ENCODE measurements at regions of chr7 and their contacts with region 1.

Region 1: DNA sequence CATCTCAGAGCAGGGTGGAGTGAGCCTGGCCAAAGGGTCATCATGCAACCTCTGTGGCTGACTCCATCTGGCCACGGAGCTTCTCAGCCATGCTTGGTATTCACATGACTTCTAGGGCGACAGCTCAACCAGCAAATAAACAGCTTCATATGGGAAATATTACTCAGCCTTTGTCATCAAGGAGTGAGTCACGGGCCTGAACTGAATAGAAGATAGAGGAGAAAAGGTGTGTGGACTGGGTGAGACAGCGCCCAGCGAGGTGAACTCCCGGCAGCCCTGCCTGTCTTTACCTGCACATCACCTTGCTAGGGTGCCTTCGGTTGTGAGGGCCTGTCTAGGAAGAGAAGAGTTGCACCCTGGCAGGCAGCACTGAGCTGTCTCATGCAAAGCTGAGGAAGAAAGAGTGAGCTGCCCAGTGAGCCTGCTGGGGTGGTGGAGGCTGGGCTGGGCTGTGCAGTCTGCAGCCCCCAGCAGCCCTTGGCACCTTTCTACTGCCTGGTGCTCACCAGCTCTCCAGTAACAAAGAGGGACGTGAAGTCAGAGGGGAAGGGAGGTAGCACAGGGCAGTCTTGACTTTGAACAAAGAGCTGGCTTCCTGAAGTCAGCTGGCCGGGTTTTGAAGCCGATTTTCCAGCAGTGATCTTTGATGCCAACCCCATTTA is 114.2 kb downstream of the EGFR start:
- DNase-seq: peak; percentile 75
- ATAC-seq: peak; percentile 54
- H3K4me3 ChIP-seq: peak overlapping the region in 2 of 3 experiments; percentile 2 to 63; a peak in 3 of 6 replicates
- H3K27ac ChIP-seq: peak overlapping the region; percentile 52
- H3K4me1 ChIP-seq: peaks cover 59% of the 10 kb centered on the region
- H3K27me3 ChIP-seq: no peaks in the 10 kb centered on the region
- CTCF ChIP-seq: no peak
- EP300 ChIP-seq: peak in 1 of 2 experiments; percentile 48; a peak in 1 of 4 replicates
- POLR2A ChIP-seq: no peak; a peak in 1 of 4 replicates
- RAD21 ChIP-seq: no peak

Region 2: GRCh38 chr7:54839538-54840213 is 293.3 kb before region 1 on chr7:
- CTCF ChIA-PET with region 1: no interaction called
- POLR2A ChIA-PET with region 1: no interaction called
- in situ Hi-C with region 1: no loop called
- intact Hi-C with region 1: loop called (anchors 5 kb)
- DNase-seq: peak; percentile 20
- ATAC-seq: peak; percentile 96
- H3K4me3 ChIP-seq: no peak overlapping the region
- H3K27ac ChIP-seq: no peak overlapping the region
- H3K4me1 ChIP-seq: peaks cover 19% of the 10 kb centered on the region
- H3K27me3 ChIP-seq: 0 out of 5 replicates have a peak, but pooled peaks cover 0 to 3% of the 10 kb centered on the region in 2 experiments
- CTCF ChIP-seq: peak; percentile 87
- EP300 ChIP-seq: no peak
- POLR2A ChIP-seq: no peak
- RAD21 ChIP-seq: peak; percentile 60

Region 3: DNA sequence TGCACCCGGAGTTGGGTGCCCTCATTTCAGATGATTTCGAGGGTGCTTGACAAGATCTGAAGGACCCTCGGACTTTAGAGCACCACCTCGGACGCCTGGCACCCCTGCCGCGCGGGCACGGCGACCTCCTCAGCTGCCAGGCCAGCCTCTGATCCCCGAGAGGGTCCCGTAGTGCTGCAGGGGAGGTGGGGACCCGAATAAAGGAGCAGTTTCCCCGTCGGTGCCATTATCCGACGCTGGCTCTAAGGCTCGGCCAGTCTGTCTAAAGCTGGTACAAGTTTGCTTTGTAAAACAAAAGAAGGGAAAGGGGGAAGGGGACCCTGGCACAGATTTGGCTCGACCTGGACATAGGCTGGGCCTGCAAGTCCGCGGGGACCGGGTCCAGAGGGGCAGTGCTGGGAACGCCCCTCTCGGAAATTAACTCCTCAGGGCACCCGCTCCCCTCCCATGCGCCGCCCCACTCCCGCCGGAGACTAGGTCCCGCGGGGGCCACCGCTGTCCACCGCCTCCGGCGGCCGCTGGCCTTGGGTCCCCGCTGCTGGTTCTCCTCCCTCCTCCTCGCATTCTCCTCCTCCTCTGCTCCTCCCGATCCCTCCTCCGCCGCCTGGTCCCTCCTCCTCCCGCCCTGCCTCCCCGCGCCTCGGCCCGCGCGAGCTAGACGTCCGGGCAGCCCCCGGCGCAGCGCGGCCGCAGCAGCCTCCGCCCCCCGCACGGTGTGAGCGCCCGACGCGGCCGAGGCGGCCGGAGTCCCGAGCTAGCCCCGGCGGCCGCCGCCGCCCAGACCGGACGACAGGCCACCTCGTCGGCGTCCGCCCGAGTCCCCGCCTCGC is 114.4 kb before region 1 on chr7 and contains the start of gene EGFR:
- CTCF ChIA-PET with region 1: no interaction called
- POLR2A ChIA-PET with region 1: interaction called, 7 read pairs
- in situ Hi-C with region 1: no loop called
- intact Hi-C with region 1: loop called (anchors 10 kb)
- DNase-seq: no peak
- ATAC-seq: peak; percentile 78
- H3K4me3 ChIP-seq: peak within 1 kb of the TSS; percentile 63 to 74 (median 64)
- H3K27ac ChIP-seq: no peak within 1 kb of the TSS
- H3K4me1 ChIP-seq: peaks cover 53% of the 10 kb centered on the region
- H3K27me3 ChIP-seq: peaks cover 7 to 32% of the 10 kb centered on the region in 2 experiments
- CTCF ChIP-seq: no peak; the same call in 1 of the 2 replicates
- EP300 ChIP-seq: no peak
- POLR2A ChIP-seq: no peak
- RAD21 ChIP-seq: 0 out of 2 replicates have a peak, but pooled peaks have one; percentile 22
- total RNA-seq, gene EGFR: 7.0 TPM in 2 replicates

Region 4: DNA sequence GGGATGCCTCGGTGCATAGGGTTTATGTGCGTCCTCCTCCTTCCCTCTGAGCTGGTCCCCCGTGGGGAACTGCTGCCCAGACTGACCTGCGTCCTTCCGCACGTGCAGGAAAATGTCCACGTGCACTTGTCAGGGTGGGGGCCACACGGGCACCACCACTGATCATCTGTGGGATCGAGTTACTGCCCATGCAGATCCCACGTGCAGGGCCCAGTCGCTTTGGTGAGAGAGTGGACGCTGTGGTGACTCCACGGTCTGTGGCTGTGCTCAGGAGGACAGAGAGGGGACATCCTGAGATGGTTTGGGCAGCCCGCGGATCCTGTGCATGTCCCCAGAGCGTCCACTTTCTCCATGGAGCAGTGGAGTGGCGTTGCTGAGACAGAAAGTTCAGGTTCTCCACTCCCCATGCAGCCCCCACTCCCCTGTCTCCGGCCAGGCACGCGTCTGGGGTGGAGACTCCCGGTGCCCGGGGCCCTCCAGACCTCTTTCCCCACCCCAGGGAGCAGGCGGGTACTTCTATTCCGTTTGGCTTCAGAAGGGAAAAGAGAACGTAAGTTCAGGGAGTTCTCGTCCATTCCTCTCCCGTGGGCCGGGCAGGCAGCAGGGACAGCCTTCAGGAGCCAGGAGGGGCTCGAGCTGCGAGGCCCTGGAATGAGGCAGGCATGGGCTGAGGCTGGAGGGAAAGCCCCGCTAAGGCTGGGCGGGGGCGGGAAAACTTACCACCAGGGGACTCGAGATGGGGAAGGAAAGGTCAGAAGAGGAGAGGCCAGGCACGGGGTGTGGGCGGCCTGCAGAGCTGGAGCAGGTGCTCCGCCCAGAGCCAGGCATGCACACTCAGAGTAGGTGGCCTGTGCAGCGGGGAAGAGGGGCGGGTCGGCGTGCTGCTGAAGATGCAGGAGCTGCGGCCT is 54.3 kb before region 1 on chr7:
- CTCF ChIA-PET with region 1: no interaction called
- POLR2A ChIA-PET with region 1: interaction called, 9 read pairs
- in situ Hi-C with region 1: no loop called
- intact Hi-C with region 1: loop called (anchors 2 kb)
- DNase-seq: peak; percentile 77
- ATAC-seq: peak; percentile 91
- H3K4me3 ChIP-seq: peak overlapping the region; percentile 53 to 77 (median 56)
- H3K27ac ChIP-seq: peak overlapping the region; percentile 94
- H3K4me1 ChIP-seq: peaks cover 89% of the 10 kb centered on the region
- H3K27me3 ChIP-seq: no peaks in the 10 kb centered on the region
- CTCF ChIP-seq: peak; percentile 74
- EP300 ChIP-seq: peak in 1 of 2 experiments; percentile 47; a peak in 2 of 4 replicates
- POLR2A ChIP-seq: peak; percentile 27 to 48; a peak in 2 of 4 replicates
- RAD21 ChIP-seq: no peak

Region 5: DNA sequence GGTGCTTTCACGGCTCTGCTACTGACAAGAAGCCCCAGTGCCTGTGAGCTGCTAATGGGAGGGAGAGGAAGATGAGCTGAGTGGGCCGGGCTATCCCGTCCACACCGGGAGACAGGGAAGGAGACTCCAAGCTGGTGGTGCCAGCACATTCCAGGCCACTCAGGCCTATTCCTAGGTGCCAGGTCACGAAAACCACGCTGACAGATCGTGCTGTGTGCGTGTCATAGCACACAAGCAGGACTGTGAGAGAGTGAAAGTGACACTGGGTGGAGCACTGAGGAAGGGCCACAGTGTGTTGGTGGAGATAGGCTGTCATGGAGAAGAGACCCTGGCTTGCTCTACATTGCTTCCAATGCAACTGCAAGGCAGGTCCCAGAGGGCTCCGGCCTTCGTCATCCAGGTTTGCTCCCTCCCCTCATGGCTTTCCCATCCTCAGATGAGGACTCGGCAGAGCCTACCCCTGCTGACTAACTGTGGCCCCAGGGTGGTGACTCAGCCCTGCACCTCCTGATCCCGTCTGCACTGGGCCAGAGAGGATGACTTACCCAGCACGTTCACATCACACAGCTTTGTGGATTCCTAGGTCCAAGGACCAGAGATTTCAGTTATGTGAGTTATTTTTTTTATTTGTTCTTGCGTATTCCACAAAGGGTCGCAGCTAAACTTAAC is 53.1 kb after region 1 on chr7:
- CTCF ChIA-PET with region 1: no interaction called
- POLR2A ChIA-PET with region 1: interaction called, 23 read pairs
- in situ Hi-C with region 1: no loop called
- intact Hi-C with region 1: no loop called
- DNase-seq: peak; percentile 78
- ATAC-seq: peak; percentile 75
- H3K4me3 ChIP-seq: peak overlapping the region in 1 of 3 experiments; percentile 70; a peak in 2 of 6 replicates
- H3K27ac ChIP-seq: peak overlapping the region; percentile 99
- H3K4me1 ChIP-seq: peaks cover 96% of the 10 kb centered on the region
- H3K27me3 ChIP-seq: no peaks in the 10 kb centered on the region
- CTCF ChIP-seq: no peak
- EP300 ChIP-seq: peak in 1 of 2 experiments; percentile 62; a peak in 2 of 4 replicates
- POLR2A ChIP-seq: no peak
- RAD21 ChIP-seq: peak; percentile 21; the same call in 1 of the 2 replicates

Region 6: DNA sequence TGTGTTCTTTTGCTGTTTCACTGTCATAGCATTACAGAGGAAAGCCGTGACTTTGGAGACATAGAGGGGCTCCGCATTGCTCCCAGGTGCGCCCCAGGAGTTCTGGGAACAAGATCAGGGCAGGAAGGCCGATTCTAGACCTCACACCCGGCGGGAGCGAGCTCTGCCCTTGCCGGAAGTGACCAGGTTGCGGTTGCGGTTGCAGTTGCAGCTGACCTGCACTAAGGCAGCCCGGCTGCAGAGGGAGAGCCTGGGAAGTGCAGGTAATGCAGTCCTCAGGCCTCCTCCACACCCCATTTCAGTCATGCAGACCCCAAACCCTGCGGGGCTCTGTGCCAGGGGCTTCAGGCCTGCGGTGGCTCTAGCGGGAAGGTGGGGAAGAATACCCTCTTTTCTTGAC is 102.1 kb after region 1 on chr7:
- CTCF ChIA-PET with region 1: no interaction called
- POLR2A ChIA-PET with region 1: no interaction called
- in situ Hi-C with region 1: no loop called
- intact Hi-C with region 1: no loop called
- DNase-seq: no peak
- ATAC-seq: peak; percentile 68
- H3K4me3 ChIP-seq: no peak overlapping the region
- H3K27ac ChIP-seq: no peak overlapping the region
- H3K4me1 ChIP-seq: no peaks in the 10 kb centered on the region
- H3K27me3 ChIP-seq: peaks cover 3 to 53% of the 10 kb centered on the region in 2 experiments
- CTCF ChIP-seq: no peak
- EP300 ChIP-seq: no peak
- POLR2A ChIP-seq: no peak
- RAD21 ChIP-seq: no peak

Region 7: GRCh38 chr7:55245271-55245723 is 112.3 kb after region 1 on chr7:
- CTCF ChIA-PET with region 1: no interaction called
- POLR2A ChIA-PET with region 1: no interaction called
- in situ Hi-C with region 1: no loop called
- intact Hi-C with region 1: no loop called
- DNase-seq: peak; percentile 4
- ATAC-seq: peak; percentile 67
- H3K4me3 ChIP-seq: no peak overlapping the region
- H3K27ac ChIP-seq: no peak overlapping the region
- H3K4me1 ChIP-seq: peaks cover 8% of the 10 kb centered on the region; the same call in 1 of the 2 replicates
- H3K27me3 ChIP-seq: peaks cover 0 to 18% of the 10 kb centered on the region in 2 experiments; a peak in 1 of 5 replicates
- CTCF ChIP-seq: no peak
- EP300 ChIP-seq: no peak
- POLR2A ChIP-seq: no peak
- RAD21 ChIP-seq: no peak

Region 8: GRCh38 chr7:55457801-55458200 is 324.8 kb after region 1 on chr7:
- CTCF ChIA-PET with region 1: no interaction called
- POLR2A ChIA-PET with region 1: no interaction called
- in situ Hi-C with region 1: no loop called
- intact Hi-C with region 1: no loop called
- DNase-seq: no peak
- ATAC-seq: no peak
- H3K4me3 ChIP-seq: no peak overlapping the region
- H3K27ac ChIP-seq: no peak overlapping the region
- H3K4me1 ChIP-seq: no peaks in the 10 kb centered on the region
- H3K27me3 ChIP-seq: no peaks in the 10 kb centered on the region
- CTCF ChIP-seq: no peak
- EP300 ChIP-seq: no peak
- POLR2A ChIP-seq: no peak
- RAD21 ChIP-seq: no peak

Region 9: DNA sequence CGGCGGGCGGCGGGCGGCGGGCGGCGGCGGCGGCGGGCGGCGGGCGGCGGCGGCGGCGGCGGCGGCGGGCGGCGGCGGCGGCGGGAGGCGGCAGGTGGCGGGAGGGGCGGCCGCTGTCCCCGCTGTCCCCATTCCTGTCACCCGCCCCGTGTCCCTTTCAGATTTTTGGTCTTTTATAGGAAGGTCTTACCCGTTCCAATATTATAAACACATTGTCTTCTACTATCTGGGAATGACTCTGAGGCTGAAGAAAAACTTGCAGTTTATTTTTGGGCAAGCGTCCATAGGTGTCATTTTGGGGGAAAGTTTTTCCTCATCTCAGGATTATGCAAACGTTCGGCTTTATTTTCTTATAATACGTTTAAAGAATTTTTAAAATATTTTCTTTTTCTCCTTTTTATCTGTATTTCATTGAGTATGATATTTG is 754.8 kb after region 1 on chr7:
- CTCF ChIA-PET with region 1: no interaction called
- POLR2A ChIA-PET with region 1: no interaction called
- in situ Hi-C with region 1: no loop called
- intact Hi-C with region 1: no loop called
- DNase-seq: no peak
- ATAC-seq: no peak
- H3K4me3 ChIP-seq: peak overlapping the region; percentile 66 to 69 (median 66)
- H3K27ac ChIP-seq: peak overlapping the region; percentile 67
- H3K4me1 ChIP-seq: peaks cover 7% of the 10 kb centered on the region; the same call in 1 of the 2 replicates
- H3K27me3 ChIP-seq: no peaks in the 10 kb centered on the region; a peak in 1 of 5 replicates
- CTCF ChIP-seq: no peak
- EP300 ChIP-seq: no peak
- POLR2A ChIP-seq: no peak
- RAD21 ChIP-seq: no peak

Measured in HepG2 (cell line).